MCF 10A (cell line): ENCODE measurements at regions of chr1 and their contacts with region 1.

Region 1: GRCh38 chr1:18581420-18581880 is 49.2 kb upstream of the PAX7 start:
- DNase-seq: peak; percentile 36
- H3K4me3 Mint-ChIP-seq: no peak overlapping the region
- H3K27ac Mint-ChIP-seq: no peak overlapping the region
- H3K4me1 Mint-ChIP-seq: no peaks in the 10 kb centered on the region
- H3K27me3 Mint-ChIP-seq: no peaks in the 10 kb centered on the region
- CTCF ChIP-seq: peak; percentile 89

Region 2: GRCh38 chr1:17502326-17502778 is 1079.1 kb before region 1 on chr1:
- CTCF ChIA-PET with region 1: interaction called, 5 read pairs
- POLR2A ChIA-PET with region 1: no interaction called
- intact Hi-C with region 1: loop called (anchors 5 kb)
- DNase-seq: peak; percentile 74
- H3K4me3 Mint-ChIP-seq: no peak overlapping the region
- H3K27ac Mint-ChIP-seq: no peak overlapping the region
- H3K4me1 Mint-ChIP-seq: peaks cover 5% of the 10 kb centered on the region
- H3K27me3 Mint-ChIP-seq: peaks cover 16% of the 10 kb centered on the region
- CTCF ChIP-seq: peak; percentile 93

Region 3: DNA sequence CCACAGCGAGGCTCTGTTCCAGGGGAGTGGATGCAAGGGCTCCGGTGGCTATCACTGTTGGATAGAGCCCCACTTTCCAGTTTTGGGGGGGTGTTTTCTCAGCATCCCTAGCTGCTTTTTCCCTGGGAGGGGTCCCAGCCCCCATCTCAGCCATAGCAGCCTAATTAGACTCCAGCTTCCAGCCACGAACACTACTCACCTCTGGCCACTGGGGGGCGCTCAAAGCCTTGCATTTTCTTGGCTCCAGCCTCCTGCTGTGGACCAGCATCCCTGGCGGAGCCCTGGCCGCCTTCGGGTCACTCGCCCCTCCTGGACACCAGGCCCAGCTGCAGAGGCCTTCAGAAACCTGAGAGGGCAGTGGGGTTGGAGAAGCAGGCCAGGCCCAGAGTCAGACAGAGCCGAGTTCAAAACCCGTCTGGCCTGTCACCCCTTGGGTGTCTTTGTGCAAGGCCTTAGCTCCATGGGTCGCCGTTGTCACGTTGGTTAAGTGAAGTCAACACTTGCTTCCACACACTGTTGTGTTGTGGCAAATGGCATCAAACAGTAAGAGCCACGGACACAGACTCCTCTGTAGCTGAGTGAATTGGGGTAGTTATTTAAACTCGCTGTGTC is 919.8 kb before region 1 on chr1:
- CTCF ChIA-PET with region 1: interaction called, 20 read pairs
- POLR2A ChIA-PET with region 1: interaction called, 5 read pairs
- intact Hi-C with region 1: no loop called
- DNase-seq: peak; percentile 73
- H3K4me3 Mint-ChIP-seq: no peak overlapping the region
- H3K27ac Mint-ChIP-seq: no peak overlapping the region
- H3K4me1 Mint-ChIP-seq: no peaks in the 10 kb centered on the region
- H3K27me3 Mint-ChIP-seq: no peaks in the 10 kb centered on the region
- CTCF ChIP-seq: peak; percentile 93

Region 4: DNA sequence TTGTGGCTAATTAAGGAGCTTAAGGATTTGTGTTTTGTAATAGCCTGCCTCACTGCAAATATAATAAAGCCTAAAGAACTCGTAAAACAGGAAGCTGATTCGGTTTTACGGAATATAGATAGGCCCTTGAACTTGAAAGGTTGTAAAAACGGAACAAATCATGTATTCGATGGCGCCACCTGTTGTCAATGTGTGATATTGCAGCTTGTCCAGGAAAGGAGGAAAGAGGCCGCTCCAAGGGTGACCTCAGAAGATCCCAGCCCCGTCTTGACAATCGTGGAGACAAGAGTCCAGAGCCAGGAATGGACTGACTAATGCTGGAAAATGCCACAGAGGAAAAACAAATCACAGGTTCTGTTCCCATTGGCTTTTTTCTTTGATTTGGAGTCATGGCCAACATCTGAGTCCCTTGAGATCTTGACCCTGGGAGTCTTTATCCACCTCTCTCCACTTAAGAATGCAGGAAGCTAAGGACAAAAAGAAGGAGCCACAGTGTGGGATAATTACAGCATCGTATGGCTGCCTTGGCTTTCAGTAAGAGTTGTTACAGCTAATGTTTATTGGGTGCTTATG is 480.9 kb before region 1 on chr1:
- CTCF ChIA-PET with region 1: interaction called, 7 read pairs
- POLR2A ChIA-PET with region 1: no interaction called
- intact Hi-C with region 1: loop called (anchors 10 kb)
- DNase-seq: peak; percentile 75
- H3K4me3 Mint-ChIP-seq: no peak overlapping the region
- H3K27ac Mint-ChIP-seq: no peak overlapping the region
- H3K4me1 Mint-ChIP-seq: no peaks in the 10 kb centered on the region
- H3K27me3 Mint-ChIP-seq: peaks cover 43% of the 10 kb centered on the region
- CTCF ChIP-seq: peak; percentile 68

Region 5: DNA sequence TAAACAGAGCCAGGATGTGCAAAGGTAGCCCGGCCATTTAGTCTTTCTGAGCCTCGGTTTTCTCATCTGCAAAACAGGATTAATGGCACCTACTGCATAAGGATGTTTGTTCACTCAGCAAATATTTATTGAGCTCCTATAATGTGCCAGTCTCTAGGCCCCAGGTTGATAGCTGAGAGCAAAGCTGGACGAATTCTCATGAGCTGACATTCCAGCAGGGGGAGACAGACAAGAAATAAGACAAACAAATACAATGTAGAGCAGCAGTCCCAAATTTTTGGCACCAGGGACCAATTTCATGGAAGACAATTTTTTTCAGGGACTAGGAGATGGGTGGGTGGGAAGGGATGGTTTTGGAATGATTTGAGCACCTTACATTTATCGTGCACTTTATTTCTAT is 25.1 kb before region 1 on chr1:
- CTCF ChIA-PET with region 1: interaction called, 18 read pairs
- POLR2A ChIA-PET with region 1: no interaction called
- intact Hi-C with region 1: loop called (anchors 1 kb)
- DNase-seq: peak; percentile 49
- H3K4me3 Mint-ChIP-seq: no peak overlapping the region
- H3K27ac Mint-ChIP-seq: no peak overlapping the region
- H3K4me1 Mint-ChIP-seq: no peaks in the 10 kb centered on the region
- H3K27me3 Mint-ChIP-seq: peaks cover 89% of the 10 kb centered on the region
- CTCF ChIP-seq: peak; percentile 20

Region 6: DNA sequence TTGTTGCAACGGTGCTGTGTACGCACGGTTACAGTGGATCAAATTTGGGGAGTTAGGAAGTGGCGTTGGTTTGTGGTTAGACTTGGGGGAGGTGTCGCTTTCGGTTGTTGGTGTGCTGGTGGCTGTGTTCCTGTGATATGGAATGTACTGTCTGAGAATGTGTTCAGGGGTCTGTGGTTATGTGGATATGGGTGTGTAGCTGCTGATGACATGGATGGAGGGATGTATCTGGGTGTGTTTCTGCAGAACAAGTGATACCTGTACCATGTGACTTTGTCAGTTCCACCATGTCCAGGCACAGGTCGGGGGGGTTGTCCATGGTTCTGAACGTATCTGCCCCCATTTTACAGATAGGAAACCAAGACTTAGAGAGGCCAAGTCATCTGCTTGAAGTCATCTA is 71.9 kb after region 1 on chr1:
- CTCF ChIA-PET with region 1: no interaction called
- POLR2A ChIA-PET with region 1: no interaction called
- intact Hi-C with region 1: no loop called
- DNase-seq: no peak
- H3K4me3 Mint-ChIP-seq: no peak overlapping the region
- H3K27ac Mint-ChIP-seq: no peak overlapping the region
- H3K4me1 Mint-ChIP-seq: no peaks in the 10 kb centered on the region
- H3K27me3 Mint-ChIP-seq: peaks cover 40% of the 10 kb centered on the region
- CTCF ChIP-seq: no peak

Region 7: DNA sequence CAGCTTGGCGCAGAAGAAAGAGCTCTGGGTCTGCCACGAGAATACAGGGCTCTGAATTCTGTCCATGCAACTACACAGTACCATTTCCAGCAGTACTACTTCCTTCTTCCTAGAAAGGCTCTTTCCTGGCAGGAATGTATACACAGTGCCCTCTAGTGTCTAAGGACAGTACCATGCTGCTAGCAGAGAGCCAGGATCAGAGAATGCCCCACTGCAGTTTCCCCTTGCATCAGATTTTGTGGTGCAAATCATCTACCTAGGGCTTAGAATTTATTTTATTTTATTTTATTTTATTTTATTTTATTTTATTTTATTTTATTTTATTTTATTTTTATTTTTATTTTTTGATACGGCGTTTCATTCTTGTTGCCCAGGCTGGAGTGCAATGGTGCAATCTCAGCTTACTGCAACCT is 100.0 kb after region 1 on chr1:
- CTCF ChIA-PET with region 1: interaction called, 18 read pairs
- POLR2A ChIA-PET with region 1: no interaction called
- intact Hi-C with region 1: no loop called
- DNase-seq: peak; percentile 83
- H3K4me3 Mint-ChIP-seq: no peak overlapping the region
- H3K27ac Mint-ChIP-seq: peak overlapping the region; percentile 7
- H3K4me1 Mint-ChIP-seq: peaks cover 6% of the 10 kb centered on the region
- H3K27me3 Mint-ChIP-seq: no peaks in the 10 kb centered on the region
- CTCF ChIP-seq: peak; percentile 79